ENCODE measurements at regions of chr7 and their contacts with region 1.

Region 1: DNA sequence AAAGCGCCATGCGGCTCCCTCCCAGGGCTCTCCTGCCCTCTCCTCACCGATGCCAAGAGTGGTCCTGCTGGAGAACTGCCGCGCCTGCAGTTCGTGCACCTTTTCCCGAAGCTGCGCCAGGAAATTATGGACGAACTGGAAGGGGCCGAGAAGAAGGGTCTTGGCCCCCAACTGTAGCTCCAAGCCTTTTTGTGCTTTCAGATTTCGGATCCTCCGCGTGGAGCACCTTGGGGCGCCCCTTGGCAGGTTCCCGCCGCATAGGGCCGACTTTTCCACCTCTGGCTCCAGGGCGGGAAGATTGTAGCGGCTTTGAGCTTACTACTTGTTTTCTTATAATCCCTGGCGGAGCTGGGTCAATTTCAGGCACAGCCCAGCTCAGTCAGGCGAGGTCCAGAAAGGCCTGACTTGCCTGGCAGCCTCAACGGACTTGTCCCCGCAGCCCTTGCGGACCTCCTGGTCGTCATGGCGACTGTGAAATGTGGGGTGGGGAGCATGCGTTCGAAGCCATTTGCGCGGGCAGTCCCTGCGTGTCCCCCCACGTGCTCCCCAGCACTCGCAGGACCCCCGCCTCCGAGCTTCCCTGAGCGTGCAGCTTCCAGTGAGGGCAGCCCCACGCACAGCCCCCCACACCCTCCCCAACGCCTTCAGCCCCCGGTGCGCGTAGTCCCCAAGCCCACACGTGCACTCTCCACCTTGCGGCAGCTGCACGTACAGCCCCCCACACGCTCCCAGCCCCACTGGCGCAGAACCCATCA is 129.9 kb downstream of the KBTBD2 start:
- DNase-seq: peak; percentile 7
- H3K4me3 ChIP-seq: peak overlapping the region in 2 of 3 experiments; percentile 32 to 36
- H3K27ac ChIP-seq: no peak overlapping the region
- H3K4me1 ChIP-seq: peaks cover 8% of the 10 kb centered on the region
- H3K27me3 ChIP-seq: peaks cover 0 to 3% of the 10 kb centered on the region in 2 experiments
- CTCF ChIP-seq: peak in 1 of 2 donors; percentile 10
- POLR2A ChIP-seq: no peak

Region 2: GRCh38 chr7:32490127-32490822 is 271.4 kb before region 1 on chr7 and contains the start of gene LSM5:
- CTCF ChIA-PET with region 1: interaction called, 7 read pairs
- POLR2A ChIA-PET with region 1: no interaction called
- dilution Hi-C with region 1: no loop called
- intact Hi-C with region 1: loop called (anchors 2 kb)
- DNase-seq: peak; percentile 94
- H3K4me3 ChIP-seq: peak within 1 kb of the TSS; percentile 38 to 86 (median 73)
- H3K27ac ChIP-seq: peak within 1 kb of the TSS; percentile 34
- H3K4me1 ChIP-seq: peaks cover 11% of the 10 kb centered on the region
- H3K27me3 ChIP-seq: no peaks in the 10 kb centered on the region
- CTCF ChIP-seq: no peak
- POLR2A ChIP-seq: peak; percentile 84
- total RNA-seq, gene LSM5: 63.3 and 68.1 TPM in 2 replicates

Region 3: GRCh38 chr7:32648408-32649156 is 113.0 kb before region 1 on chr7:
- CTCF ChIA-PET with region 1: no interaction called
- POLR2A ChIA-PET with region 1: no interaction called
- dilution Hi-C with region 1: no loop called
- intact Hi-C with region 1: no loop called
- DNase-seq: no peak
- H3K4me3 ChIP-seq: no peak overlapping the region
- H3K27ac ChIP-seq: no peak overlapping the region
- H3K4me1 ChIP-seq: no peaks in the 10 kb centered on the region
- H3K27me3 ChIP-seq: no peaks in the 10 kb centered on the region
- CTCF ChIP-seq: no peak
- POLR2A ChIP-seq: no peak

Region 4: DNA sequence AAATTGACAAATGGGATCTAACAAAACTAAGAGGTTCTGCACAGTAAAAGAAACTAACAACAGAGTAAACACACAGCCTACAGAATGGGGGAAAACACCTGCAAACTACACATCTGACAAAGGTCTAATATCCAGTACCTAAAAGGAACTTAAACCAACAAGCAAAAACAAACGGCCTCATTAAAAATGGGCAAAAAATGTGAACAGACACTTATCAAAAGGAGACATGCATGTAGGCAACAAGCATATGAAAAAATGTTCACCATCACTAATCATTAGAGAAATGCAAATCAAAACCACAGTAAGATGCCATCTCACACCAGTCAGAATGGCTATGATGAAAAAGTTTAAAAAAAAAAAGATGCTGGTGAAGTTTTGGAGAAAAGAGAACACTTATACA is 67.4 kb before region 1 on chr7:
- CTCF ChIA-PET with region 1: no interaction called
- POLR2A ChIA-PET with region 1: no interaction called
- dilution Hi-C with region 1: no loop called
- intact Hi-C with region 1: loop called (anchors 5 kb)
- DNase-seq: no peak
- H3K4me3 ChIP-seq: no peak overlapping the region
- H3K27ac ChIP-seq: no peak overlapping the region
- H3K4me1 ChIP-seq: no peaks in the 10 kb centered on the region
- H3K27me3 ChIP-seq: no peaks in the 10 kb centered on the region
- CTCF ChIP-seq: no peak
- POLR2A ChIP-seq: no peak

Region 5: GRCh38 chr7:32957326-32958045 is 195.9 kb after region 1 on chr7 and contains the start of gene FKBP9:
- CTCF ChIA-PET with region 1: no interaction called
- POLR2A ChIA-PET with region 1: no interaction called
- dilution Hi-C with region 1: no loop called
- intact Hi-C with region 1: loop called (anchors 5 kb)
- DNase-seq: peak; percentile 82
- H3K4me3 ChIP-seq: peak within 1 kb of the TSS; percentile 50 to 89 (median 73)
- H3K27ac ChIP-seq: peak within 1 kb of the TSS; percentile 78
- H3K4me1 ChIP-seq: peaks cover 10% of the 10 kb centered on the region
- H3K27me3 ChIP-seq: no peaks in the 10 kb centered on the region
- CTCF ChIP-seq: no peak
- POLR2A ChIP-seq: peak; percentile 92
- total RNA-seq, gene FKBP9: 112 and 124 TPM in 2 replicates

Region 6: DNA sequence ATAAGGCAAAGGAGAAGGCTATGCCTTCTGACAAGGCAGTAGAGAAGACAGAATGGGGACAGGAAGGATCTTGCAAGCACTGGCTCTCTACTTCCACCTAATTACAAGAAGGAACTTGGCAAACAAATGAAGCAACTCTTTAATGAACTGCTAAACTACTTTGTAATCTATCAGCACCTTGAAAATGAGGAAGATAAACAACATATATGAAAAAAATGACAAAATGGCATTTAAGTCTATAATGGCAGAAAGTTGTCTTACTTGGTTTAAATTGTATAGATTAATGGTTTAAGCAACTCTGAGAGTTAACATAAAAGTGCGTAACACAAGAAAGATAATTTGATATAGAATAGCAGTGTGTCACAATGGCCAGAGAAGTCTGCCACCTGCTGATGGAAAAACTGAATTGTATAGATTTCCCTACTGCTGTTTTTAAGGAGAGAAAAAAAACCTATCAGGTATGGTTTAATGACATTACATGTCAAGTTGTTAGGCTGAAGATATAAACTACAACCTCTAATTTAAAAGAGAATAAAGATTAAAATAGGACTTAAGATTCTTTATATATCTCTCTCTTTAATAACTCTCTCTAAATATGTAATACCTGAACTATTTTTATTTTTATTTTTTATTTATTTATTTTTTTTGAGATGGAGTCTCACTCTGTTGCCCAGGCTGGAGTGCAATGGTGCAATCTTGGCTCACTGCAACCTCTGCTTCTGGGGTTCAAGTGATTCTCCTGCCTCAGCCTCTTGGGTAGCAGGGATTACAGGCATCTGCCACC is 289.1 kb after region 1 on chr7:
- CTCF ChIA-PET with region 1: interaction called, 6 read pairs
- POLR2A ChIA-PET with region 1: no interaction called
- dilution Hi-C with region 1: no loop called
- intact Hi-C with region 1: loop called (anchors 2 kb)
- DNase-seq: peak; percentile 84
- H3K4me3 ChIP-seq: no peak overlapping the region
- H3K27ac ChIP-seq: no peak overlapping the region
- H3K4me1 ChIP-seq: peaks cover 11% of the 10 kb centered on the region
- H3K27me3 ChIP-seq: no peaks in the 10 kb centered on the region
- CTCF ChIP-seq: peak; percentile 41 to 52
- POLR2A ChIP-seq: no peak

Region 7: DNA sequence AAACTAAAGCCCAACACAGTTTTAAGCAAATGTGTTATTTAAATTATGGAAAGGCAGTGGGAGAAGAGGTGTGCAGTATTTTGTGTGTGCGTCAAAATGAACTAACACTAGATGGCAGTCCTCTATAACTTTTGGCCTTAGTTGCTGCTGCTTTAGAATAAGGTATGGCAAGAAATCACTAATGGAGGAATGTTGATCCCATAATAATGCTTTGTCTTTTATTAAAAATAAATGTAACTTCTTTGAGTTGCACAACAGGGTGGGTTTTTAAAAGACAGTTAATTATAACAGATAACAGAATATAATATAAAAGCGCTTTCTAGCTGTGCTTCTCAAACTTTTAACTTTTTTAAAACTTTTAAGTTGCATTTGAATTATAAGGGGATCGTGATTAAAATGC is 424.2 kb after region 1 on chr7:
- CTCF ChIA-PET with region 1: no interaction called
- POLR2A ChIA-PET with region 1: no interaction called
- dilution Hi-C with region 1: no loop called
- intact Hi-C with region 1: loop called (anchors 10 kb)
- DNase-seq: peak; percentile 63
- H3K4me3 ChIP-seq: no peak overlapping the region
- H3K27ac ChIP-seq: no peak overlapping the region
- H3K4me1 ChIP-seq: no peaks in the 10 kb centered on the region
- H3K27me3 ChIP-seq: no peaks in the 10 kb centered on the region
- CTCF ChIP-seq: peak; percentile 34 to 52
- POLR2A ChIP-seq: no peak

Region 8: GRCh38 chr7:33886149-33886623 is 1124.6 kb after region 1 on chr7:
- CTCF ChIA-PET with region 1: no interaction called
- POLR2A ChIA-PET with region 1: no interaction called
- dilution Hi-C with region 1: no loop called
- intact Hi-C with region 1: loop called (anchors 5 kb)
- DNase-seq: no peak
- H3K4me3 ChIP-seq: no peak overlapping the region
- H3K27ac ChIP-seq: no peak overlapping the region
- H3K4me1 ChIP-seq: no peaks in the 10 kb centered on the region
- H3K27me3 ChIP-seq: no peaks in the 10 kb centered on the region
- CTCF ChIP-seq: peak; percentile 27 to 34
- POLR2A ChIP-seq: no peak